CD4-positive, alpha-beta memory T cell (primary cell): ENCODE measurements at regions of chr1 and their contacts with region 1.

Region 1: GRCh38 chr1:204431310-204432165 is 19.9 kb upstream of the PPP1R15B start:
- DNase-seq: peak; percentile 68 to 75 (median 71)
- H3K4me3 ChIP-seq: no peak overlapping the region
- H3K4me3 Mint-ChIP-seq: no peak overlapping the region
- H3K27ac ChIP-seq: no peak overlapping the region
- H3K27ac Mint-ChIP-seq: peak overlapping the region in 6 of 7 donors; percentile 8 to 78 (median 71)
- H3K4me1 ChIP-seq: no peaks in the 10 kb centered on the region
- H3K4me1 Mint-ChIP-seq: peaks cover 0 to 9% (median 6%) of the 10 kb centered on the region in 4 donors
- H3K27me3 ChIP-seq: no peaks in the 10 kb centered on the region
- H3K27me3 Mint-ChIP-seq: no peaks in the 10 kb centered on the region

Region 2: GRCh38 chr1:204350857-204351573 is 80.5 kb before region 1 on chr1:
- CTCF ChIA-PET with region 1: no interaction called
- POLR2A ChIA-PET with region 1: no interaction called
- intact Hi-C with region 1: no loop called
- DNase-seq: no peak
- H3K4me3 ChIP-seq: no peak overlapping the region
- H3K4me3 Mint-ChIP-seq: no peak overlapping the region
- H3K27ac ChIP-seq: no peak overlapping the region
- H3K27ac Mint-ChIP-seq: no peak overlapping the region
- H3K4me1 ChIP-seq: no peaks in the 10 kb centered on the region
- H3K4me1 Mint-ChIP-seq: peaks cover 0 to 2% (median 0%) of the 10 kb centered on the region in 4 donors
- H3K27me3 ChIP-seq: no peaks in the 10 kb centered on the region
- H3K27me3 Mint-ChIP-seq: peaks cover 1 to 3% of the 10 kb centered on the region in 2 donors

Region 3: GRCh38 chr1:204411451-204412204 is 19.9 kb before region 1 on chr1 and contains the start of gene PPP1R15B:
- CTCF ChIA-PET with region 1: interaction called, 19 read pairs
- POLR2A ChIA-PET with region 1: no interaction called
- intact Hi-C with region 1: no loop called
- DNase-seq: peak; percentile 98 to 99 (median 98)
- H3K4me3 ChIP-seq: peak within 1 kb of the TSS; percentile 67 to 99
- H3K4me3 Mint-ChIP-seq: peak within 1 kb of the TSS; percentile 98 to 99 (median 99)
- H3K27ac ChIP-seq: peak within 1 kb of the TSS; percentile 100
- H3K27ac Mint-ChIP-seq: peak within 1 kb of the TSS; percentile 99 to 100 (median 100)
- H3K4me1 ChIP-seq: peaks cover 7% of the 10 kb centered on the region
- H3K4me1 Mint-ChIP-seq: peaks cover 8 to 21% (median 13%) of the 10 kb centered on the region in 4 donors
- H3K27me3 ChIP-seq: no peaks in the 10 kb centered on the region
- H3K27me3 Mint-ChIP-seq: no peaks in the 10 kb centered on the region
- total RNA-seq, gene PPP1R15B: 78.0 to 81.1 TPM

Region 4: DNA sequence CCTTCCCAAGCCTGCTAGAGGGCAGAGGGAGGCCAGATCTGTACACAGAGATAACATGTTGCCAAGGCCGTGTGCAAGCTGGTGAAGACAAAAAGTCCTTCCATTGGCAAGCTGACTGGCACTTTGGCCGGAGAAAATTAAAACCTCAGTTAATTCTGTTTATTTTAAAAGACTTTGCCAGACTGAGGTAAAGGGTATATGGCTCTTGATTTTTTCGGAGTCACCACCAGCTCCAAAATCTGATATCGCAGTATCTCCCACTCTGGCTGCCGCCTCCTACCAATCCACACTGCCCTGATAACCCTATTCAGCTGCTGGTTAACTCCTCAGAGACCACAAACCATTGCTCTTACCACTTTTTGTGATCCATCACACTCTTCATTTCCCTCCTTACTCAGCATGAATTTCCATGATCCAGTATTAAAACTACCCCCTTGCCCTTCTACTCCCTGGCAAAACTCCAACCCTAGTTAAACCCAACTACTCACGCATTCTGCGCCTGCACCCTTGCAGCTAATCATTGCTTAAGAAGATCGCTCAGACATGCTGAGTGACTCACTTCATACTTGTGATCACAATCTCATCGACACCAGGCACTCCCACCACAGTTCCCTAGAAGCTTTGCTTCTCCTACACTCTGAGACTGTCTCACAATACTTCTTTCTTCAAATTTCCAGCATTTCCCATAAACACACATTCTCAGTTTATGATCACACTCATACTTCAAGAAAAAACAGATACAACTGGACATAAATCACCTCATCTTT is 14.1 kb before region 1 on chr1:
- CTCF ChIA-PET with region 1: interaction called, 19 read pairs
- POLR2A ChIA-PET with region 1: no interaction called
- intact Hi-C with region 1: no loop called
- DNase-seq: peak in 1 of 5 donors; percentile 52
- H3K4me3 ChIP-seq: no peak overlapping the region
- H3K4me3 Mint-ChIP-seq: no peak overlapping the region
- H3K27ac ChIP-seq: no peak overlapping the region
- H3K27ac Mint-ChIP-seq: peak overlapping the region in 4 of 7 donors; percentile 56 to 90 (median 76)
- H3K4me1 ChIP-seq: peaks cover 4% of the 10 kb centered on the region
- H3K4me1 Mint-ChIP-seq: peaks cover 11 to 21% (median 19%) of the 10 kb centered on the region in 4 donors
- H3K27me3 ChIP-seq: no peaks in the 10 kb centered on the region
- H3K27me3 Mint-ChIP-seq: no peaks in the 10 kb centered on the region